Psoas muscle (tissue), 8 donors: ENCODE measurements at regions of chr9 and their contacts with region 1.

Region 1: DNA sequence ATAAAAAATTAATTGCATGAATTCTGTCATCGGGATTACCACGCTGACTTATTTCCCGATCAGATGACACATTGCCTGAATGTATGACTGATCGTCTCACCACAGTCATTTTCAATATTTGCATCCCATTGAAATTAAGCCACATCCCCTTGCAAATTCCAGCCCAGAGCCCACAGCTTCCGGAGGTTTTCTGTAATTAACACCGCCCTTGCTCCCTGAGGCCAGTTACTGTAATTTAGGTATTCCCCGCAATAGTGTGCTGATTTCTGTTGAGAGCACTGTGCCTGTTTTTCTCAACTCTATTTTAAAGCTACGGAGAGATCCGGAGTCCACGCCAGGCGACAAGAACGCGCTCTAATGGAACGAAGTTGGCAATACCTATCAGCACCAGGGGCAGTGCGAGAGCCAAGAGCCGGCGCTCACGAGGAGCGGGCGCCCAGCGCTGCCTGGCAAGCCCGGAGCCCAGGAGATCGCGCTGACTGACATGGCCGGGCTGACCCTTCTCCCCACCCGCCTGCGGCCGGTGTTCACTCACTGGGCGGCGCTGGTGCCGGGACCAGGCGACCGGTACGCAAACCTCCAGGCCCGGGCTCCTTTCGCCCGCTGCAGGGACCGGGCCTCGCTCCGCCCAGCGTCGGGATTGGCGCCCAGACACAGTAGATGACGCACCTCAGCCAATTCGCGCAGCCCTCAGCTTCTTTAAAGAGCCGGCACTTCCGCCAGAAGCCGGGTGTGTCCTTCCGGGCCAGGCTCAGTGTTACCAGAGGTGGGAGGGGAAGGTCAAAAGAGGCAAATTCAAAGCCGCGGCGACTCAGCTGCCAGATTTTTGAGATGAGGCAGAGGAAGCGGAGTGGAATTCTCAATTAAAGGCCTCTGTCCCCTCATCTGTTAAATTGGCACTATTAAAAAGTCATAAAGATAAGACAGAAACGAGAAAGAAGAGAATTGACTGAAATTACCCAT is at the start of gene PLGRKT:
- DNase-seq: peak; percentile 96 to 98
- ATAC-seq: peak; percentile 97 to 98 (median 98)
- H3K4me3 ChIP-seq: peak within 1 kb of the TSS; percentile 70
- H3K27ac ChIP-seq: peak within 1 kb of the TSS; percentile 92
- H3K4me1 ChIP-seq: peaks cover 15% of the 10 kb centered on the region
- H3K27me3 ChIP-seq: no peaks in the 10 kb centered on the region
- CTCF ChIP-seq: peak; percentile 27
- total RNA-seq, gene PLGRKT: 21.4 to 32.2 (median 26.8) TPM

Region 2: DNA sequence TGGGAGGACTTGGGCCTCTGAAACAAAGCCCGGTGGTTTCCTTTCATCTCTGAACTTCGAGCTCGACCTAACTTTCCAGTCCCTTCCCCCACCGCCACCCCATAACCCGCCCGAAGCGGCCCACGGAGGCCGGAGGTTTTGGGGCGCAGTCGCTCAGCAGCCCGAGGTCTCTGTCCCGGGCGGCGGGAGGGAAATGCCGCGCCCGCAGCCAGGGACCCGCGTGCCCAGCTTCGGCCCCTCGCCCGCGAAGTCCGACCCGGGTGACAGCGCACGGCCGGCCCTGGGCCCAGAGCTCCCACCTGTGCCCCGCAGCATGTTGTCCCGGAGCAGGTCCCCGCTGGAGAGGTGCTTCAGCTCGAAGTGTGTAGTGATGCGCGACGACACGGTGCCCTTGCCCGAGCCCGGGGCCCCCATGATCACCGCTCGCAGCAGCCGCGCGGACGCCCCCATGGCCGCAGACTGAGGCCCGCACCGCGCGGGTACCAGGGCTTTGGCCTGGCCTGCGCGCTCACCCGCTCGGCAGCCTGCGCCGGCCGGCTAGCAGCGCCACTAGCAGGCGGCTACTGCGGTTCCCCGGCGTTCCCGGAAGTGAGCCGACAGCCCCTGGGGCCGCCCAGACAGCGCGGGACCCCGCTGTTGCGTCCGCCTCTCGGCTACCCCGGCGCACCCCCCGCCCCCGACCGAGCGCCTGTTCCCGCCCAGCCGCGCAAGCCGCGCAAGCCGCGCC is 696.7 kb before region 1 on chr9 and contains the start of gene AK3:
- intact Hi-C with region 1: loop called in 1 of 2 experiments (anchors 10 kb)
- DNase-seq: peak; percentile 90 to 95
- ATAC-seq: peak; percentile 88 to 93 (median 90)
- H3K4me3 ChIP-seq: peak within 1 kb of the TSS; percentile 80
- H3K27ac ChIP-seq: peak within 1 kb of the TSS; percentile 85
- H3K4me1 ChIP-seq: peaks cover 13% of the 10 kb centered on the region
- H3K27me3 ChIP-seq: no peaks in the 10 kb centered on the region
- CTCF ChIP-seq: peak; percentile 27
- total RNA-seq, gene AK3: 100 to 143 (median 115) TPM

Region 3: DNA sequence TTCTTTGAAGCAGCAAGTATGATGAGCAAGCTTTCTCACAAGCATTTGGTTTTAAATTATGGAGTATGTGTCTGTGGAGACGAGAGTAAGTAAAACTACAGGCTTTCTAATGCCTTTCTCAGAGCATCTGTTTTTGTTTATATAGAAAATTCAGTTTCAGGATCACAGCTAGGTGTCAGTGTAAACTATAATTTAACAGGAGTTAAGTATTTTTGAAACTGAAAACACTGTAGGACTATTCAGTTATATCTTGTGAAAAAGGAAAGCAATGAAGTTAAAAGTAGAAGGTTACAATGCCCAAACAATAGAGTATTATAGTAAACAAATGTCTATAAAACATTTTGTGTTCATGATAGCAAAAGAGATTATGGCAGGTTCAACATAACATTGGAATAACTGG is 363.8 kb before region 1 on chr9:
- intact Hi-C with region 1: no loop called
- DNase-seq: no peak
- ATAC-seq: no peak
- H3K4me3 ChIP-seq: no peak overlapping the region
- H3K27ac ChIP-seq: no peak overlapping the region
- H3K4me1 ChIP-seq: no peaks in the 10 kb centered on the region
- H3K27me3 ChIP-seq: no peaks in the 10 kb centered on the region
- CTCF ChIP-seq: no peak

Region 4: GRCh38 chr9:5586391-5586802 is 148.9 kb after region 1 on chr9:
- intact Hi-C with region 1: loop called in 1 of 2 experiments (anchors 5 kb)
- DNase-seq: no peak
- ATAC-seq: no peak
- H3K4me3 ChIP-seq: no peak overlapping the region
- H3K27ac ChIP-seq: no peak overlapping the region
- H3K4me1 ChIP-seq: no peaks in the 10 kb centered on the region
- H3K27me3 ChIP-seq: no peaks in the 10 kb centered on the region
- CTCF ChIP-seq: no peak

Region 5: GRCh38 chr9:5714501-5715401 is 277.2 kb after region 1 on chr9:
- intact Hi-C with region 1: loop called in 1 of 2 experiments (anchors 10 kb)
- DNase-seq: no peak
- ATAC-seq: peak in 2 of 4 donors; percentile 33 to 42
- H3K4me3 ChIP-seq: no peak overlapping the region
- H3K27ac ChIP-seq: no peak overlapping the region
- H3K4me1 ChIP-seq: peaks cover 10% of the 10 kb centered on the region
- H3K27me3 ChIP-seq: no peaks in the 10 kb centered on the region
- CTCF ChIP-seq: peak; percentile 28

Region 6: GRCh38 chr9:5832543-5833529 is 395.3 kb after region 1 on chr9 and contains the start of gene ERMP1:
- intact Hi-C with region 1: loop called in 1 of 2 experiments (anchors 10 kb)
- DNase-seq: peak; percentile 92 to 95
- ATAC-seq: peak; percentile 92 to 94 (median 94)
- H3K4me3 ChIP-seq: peak within 1 kb of the TSS; percentile 95
- H3K27ac ChIP-seq: peak within 1 kb of the TSS; percentile 86
- H3K4me1 ChIP-seq: peaks cover 9% of the 10 kb centered on the region
- H3K27me3 ChIP-seq: no peaks in the 10 kb centered on the region
- CTCF ChIP-seq: peak; percentile 84
- total RNA-seq, gene ERMP1: 5.0 to 12.3 (median 9.4) TPM